Cardiac septum (tissue), 1 donor: ENCODE measurements at regions of chr5 and their contacts with region 1.

Region 1: DNA sequence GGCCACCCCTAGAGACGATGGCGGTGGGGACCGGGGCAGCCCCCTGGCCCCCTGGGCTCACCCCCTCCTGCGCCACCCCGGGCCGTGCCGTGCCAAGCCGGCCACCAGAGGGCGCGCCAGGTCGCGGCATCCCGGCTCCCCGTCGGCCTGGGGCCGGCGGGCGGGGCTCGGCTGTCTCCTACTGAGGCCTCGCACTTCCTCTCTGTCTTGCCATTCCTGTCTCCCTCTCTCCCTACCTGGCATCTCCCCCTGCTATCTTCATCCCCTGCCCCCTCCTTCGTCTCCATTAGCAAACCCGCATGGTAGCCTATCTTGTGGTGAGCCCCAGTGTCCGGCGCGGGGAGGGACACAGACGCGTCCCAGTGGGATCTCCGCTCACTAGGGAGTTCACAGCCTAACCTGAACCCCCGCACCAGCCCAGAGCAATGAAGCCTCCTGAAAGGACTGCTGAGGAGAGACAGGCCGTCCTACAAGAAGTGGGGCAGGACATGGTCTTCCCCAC is 29.8 kb upstream of the FABP6 start:
- DNase-seq: peak; percentile 91

Region 2: GRCh38 chr5:160011471-160011870 is 188.0 kb before region 1 on chr5:
- intact Hi-C with region 1: loop called (anchors 10 kb)
- DNase-seq: no peak

Region 3: DNA sequence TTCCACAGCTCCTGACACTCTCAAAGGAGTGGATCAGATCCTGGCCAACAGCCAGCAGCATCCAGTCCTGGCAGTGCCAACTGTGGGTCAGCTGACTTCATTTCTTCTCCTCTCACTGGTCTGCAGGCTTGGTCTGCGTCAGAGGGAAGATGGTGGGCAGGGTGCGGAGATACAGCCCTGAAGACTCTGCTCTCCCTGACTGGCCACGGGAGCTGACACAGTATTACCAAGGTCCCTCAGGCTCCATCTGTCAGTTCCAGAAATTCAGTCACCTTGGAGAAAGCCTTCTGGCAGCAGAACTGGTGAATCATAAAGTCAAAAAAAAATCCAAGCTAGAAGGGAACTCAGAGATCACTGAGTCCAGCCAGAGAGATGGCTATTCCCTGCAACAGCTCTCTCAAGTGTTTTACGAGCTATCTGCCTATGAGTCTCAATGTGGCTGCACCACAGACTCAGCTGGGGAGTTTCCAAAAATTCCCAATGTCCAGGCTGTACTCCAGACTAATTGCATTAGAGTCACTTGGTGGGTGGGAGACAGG is 143.0 kb after region 1 on chr5:
- intact Hi-C with region 1: loop called (anchors 1 kb)
- DNase-seq: peak; percentile 20